H1 (cell line): ENCODE measurements at regions of chr18 and their contacts with region 1.

Region 1: DNA sequence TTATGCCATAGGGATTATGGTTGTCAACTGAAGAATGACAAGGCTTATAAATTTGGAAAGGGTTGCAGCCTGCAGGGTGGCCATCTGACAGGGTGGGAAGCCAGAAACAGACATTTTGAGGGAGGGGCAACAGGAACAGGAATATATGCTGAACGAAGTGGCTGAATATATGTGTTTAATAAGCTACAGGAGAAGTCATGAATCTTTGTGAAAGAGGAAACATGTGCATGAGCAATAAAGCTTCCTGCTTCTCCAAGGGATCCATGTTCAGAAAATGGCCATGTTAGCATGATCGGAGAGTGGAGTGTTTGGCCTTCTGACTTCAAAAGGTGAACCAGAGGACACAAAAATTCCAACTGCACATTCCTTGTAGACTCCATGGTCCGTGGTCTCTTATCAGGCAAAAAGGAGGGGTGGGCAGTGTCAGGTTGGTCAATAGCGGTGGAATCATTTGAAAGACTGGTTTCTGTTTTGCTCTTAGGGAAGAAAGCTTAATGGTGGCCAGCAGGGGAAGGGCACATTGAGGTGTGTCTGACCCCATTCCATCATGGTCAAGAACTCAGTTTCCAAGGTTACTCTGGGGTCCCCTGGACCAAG is 144.1 kb downstream of the SOCS6 start:
- DNase-seq: no peak
- H3K4me3 ChIP-seq: no peak overlapping the region
- H3K27ac ChIP-seq: no peak overlapping the region
- H3K4me1 ChIP-seq: no peaks in the 10 kb centered on the region
- H3K27me3 ChIP-seq: no peaks in the 10 kb centered on the region
- CTCF ChIP-seq: no peak
- EP300 ChIP-seq: no peak
- POLR2A ChIP-seq: no peak
- RAD21 ChIP-seq: no peak

Region 2: GRCh38 chr18:70195852-70196434 is 237.0 kb before region 1 on chr18:
- CTCF ChIA-PET with region 1: interaction called, 69 read pairs
- POLR2A ChIA-PET with region 1: no interaction called
- DNase-seq: no peak
- H3K4me3 ChIP-seq: no peak overlapping the region
- H3K27ac ChIP-seq: no peak overlapping the region
- H3K4me1 ChIP-seq: no peaks in the 10 kb centered on the region
- H3K27me3 ChIP-seq: peaks cover 0 to 1% (median 0%) of the 10 kb centered on the region in 4 experiments; a peak in 1 of 7 replicates
- CTCF ChIP-seq: peak in 2 of 3 experiments; percentile 71 to 73; a peak in 3 of 4 replicates
- EP300 ChIP-seq: no peak
- POLR2A ChIP-seq: no peak
- RAD21 ChIP-seq: peak; percentile 76 to 81

Region 3: GRCh38 chr18:70301667-70302066 is 131.2 kb before region 1 on chr18:
- CTCF ChIA-PET with region 1: interaction called, 10 read pairs
- POLR2A ChIA-PET with region 1: no interaction called
- DNase-seq: no peak
- H3K4me3 ChIP-seq: no peak overlapping the region
- H3K27ac ChIP-seq: no peak overlapping the region
- H3K4me1 ChIP-seq: peaks cover 0 to 7% (median 6%) of the 10 kb centered on the region in 4 experiments; a peak in 5 of 7 replicates
- H3K27me3 ChIP-seq: no peaks in the 10 kb centered on the region
- CTCF ChIP-seq: no peak
- EP300 ChIP-seq: no peak
- POLR2A ChIP-seq: no peak
- RAD21 ChIP-seq: no peak

Region 4: DNA sequence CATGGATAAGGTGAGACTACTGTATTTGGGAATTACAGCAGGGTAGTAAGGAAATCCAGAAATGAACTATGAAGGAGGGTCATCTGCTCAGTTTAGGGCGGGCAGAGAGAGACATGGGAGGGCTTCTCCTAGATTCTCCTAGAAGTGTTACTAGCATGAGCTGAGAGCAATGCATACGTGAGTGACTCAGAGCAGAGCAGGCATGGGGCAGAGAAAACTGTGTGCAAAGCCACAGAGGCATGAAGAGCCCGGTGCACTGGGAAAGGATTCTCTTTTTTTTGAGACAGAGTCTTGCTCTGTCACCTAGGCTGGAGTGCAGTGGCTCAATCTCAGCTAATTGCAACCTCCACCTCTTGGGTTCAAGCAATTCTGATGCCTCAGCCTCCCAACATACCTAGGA is 27.9 kb before region 1 on chr18:
- CTCF ChIA-PET with region 1: interaction called, 16 read pairs
- POLR2A ChIA-PET with region 1: no interaction called
- DNase-seq: no peak
- H3K4me3 ChIP-seq: no peak overlapping the region
- H3K27ac ChIP-seq: no peak overlapping the region
- H3K4me1 ChIP-seq: no peaks in the 10 kb centered on the region
- H3K27me3 ChIP-seq: no peaks in the 10 kb centered on the region
- CTCF ChIP-seq: no peak
- EP300 ChIP-seq: no peak
- POLR2A ChIP-seq: no peak
- RAD21 ChIP-seq: no peak

Region 5: DNA sequence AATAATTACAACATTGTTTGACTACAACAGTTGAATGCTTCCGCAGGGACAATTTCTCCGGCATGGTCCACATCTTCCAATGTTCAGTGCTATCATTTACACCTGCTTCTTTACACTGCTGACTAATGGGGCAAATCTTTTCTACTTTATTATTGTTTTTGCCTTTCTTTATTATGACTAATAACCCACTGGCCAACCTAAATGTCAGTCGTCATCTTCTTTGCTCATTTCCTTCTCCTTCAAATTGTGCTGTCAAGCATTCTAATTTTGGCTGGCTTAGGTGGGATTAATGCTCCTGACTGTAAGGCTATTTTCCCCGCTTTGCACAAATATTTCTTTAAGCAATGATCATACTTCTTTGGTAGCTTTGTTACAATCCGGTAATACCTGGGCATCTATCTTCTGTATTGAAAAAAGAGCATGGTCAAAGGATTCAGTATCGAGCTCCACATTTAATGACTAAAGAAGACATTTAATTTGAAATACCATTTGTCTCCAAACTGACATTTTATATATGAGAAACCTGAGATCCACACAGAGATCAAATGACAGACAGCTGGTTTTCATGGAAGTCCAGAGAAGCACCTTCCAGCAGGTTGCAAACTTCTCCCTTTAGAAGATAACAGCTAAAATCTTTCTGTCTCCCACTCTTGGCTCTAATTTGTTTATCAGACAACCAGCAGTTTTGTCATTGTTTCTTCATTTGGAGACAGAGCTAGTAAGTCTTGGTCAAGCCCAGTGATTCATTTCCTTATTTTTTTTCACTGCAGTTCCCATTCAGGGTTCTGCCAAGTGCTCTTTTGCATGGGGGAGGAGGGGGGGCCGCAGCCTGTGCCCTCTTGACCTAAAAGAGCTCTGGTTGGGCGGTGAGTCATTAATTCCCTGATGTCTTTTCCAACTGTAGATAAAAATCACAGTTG is 11.2 kb before region 1 on chr18:
- CTCF ChIA-PET with region 1: interaction called, 35 read pairs
- POLR2A ChIA-PET with region 1: no interaction called
- DNase-seq: no peak
- H3K4me3 ChIP-seq: no peak overlapping the region
- H3K27ac ChIP-seq: no peak overlapping the region
- H3K4me1 ChIP-seq: peaks cover 0 to 14% (median 6%) of the 10 kb centered on the region in 4 experiments; a peak in 4 of 7 replicates
- H3K27me3 ChIP-seq: no peaks in the 10 kb centered on the region
- CTCF ChIP-seq: no peak
- EP300 ChIP-seq: no peak
- POLR2A ChIP-seq: no peak
- RAD21 ChIP-seq: no peak

Region 6: DNA sequence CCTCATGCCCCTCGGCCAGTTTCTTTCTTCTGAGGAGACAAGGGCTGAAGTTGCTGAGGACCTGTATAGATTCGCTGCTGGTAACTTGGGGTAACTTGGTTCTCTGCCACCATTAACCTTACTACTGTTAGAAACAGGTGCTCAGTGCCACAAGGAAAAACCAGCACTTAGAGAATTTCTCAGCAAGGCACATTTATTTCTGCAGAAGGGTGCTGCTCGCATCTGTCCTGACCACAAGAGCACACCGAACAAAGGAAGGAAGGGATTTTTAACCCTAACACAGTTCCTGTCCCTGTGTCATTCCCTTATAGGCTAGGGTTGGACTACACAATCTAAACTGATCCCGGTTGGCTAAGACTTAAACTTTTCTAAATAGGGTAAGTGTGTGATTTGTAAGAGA is 10.0 kb after region 1 on chr18:
- CTCF ChIA-PET with region 1: interaction called, 27 read pairs
- POLR2A ChIA-PET with region 1: no interaction called
- DNase-seq: no peak
- H3K4me3 ChIP-seq: no peak overlapping the region
- H3K27ac ChIP-seq: 0 out of 2 replicates have a peak overlapping the region, but pooled peaks have one; percentile 31
- H3K4me1 ChIP-seq: peaks cover 0 to 8% (median 0%) of the 10 kb centered on the region in 4 experiments; a peak in 1 of 7 replicates
- H3K27me3 ChIP-seq: no peaks in the 10 kb centered on the region
- CTCF ChIP-seq: no peak
- EP300 ChIP-seq: no peak
- POLR2A ChIP-seq: no peak
- RAD21 ChIP-seq: no peak

Region 7: DNA sequence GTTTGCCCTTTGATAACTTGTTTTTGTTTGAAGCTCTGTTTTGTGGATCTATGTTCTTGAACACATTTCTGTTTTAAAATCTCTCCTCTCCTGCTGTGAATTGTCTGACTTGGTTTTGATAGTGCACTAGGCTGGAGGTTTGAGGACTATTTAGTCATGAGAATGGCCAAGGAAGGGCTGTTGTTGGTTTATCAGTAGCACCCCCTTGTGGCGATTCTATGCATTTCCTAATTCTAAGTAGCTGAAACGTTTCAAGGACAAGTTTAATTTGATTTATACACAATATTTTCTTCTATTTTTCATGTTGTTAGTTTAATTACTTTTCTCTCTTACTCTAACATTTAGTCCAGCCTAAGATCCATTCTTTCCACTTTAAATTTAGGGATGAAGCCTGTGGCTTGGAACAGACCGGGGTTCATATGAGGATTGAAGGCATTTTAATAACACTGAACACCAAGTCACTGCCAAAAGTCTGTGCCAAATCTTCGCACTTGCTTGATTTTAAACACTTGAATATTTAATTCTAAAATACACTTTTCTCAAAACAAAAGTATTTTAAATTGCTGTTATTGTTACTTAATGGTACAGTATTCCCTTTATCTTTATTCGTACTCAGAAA is 21.9 kb after region 1 on chr18:
- CTCF ChIA-PET with region 1: interaction called, 27 read pairs
- POLR2A ChIA-PET with region 1: no interaction called
- DNase-seq: no peak
- H3K4me3 ChIP-seq: no peak overlapping the region
- H3K27ac ChIP-seq: no peak overlapping the region
- H3K4me1 ChIP-seq: peaks cover 0 to 11% (median 0%) of the 10 kb centered on the region in 4 experiments; a peak in 2 of 7 replicates
- H3K27me3 ChIP-seq: no peaks in the 10 kb centered on the region
- CTCF ChIP-seq: peak in 2 of 3 experiments; percentile 56 to 72; a peak in 3 of 4 replicates
- EP300 ChIP-seq: no peak
- POLR2A ChIP-seq: no peak
- RAD21 ChIP-seq: peak; percentile 72 to 73